PC-9 (cell line): ENCODE measurements at regions of chr1 and their contacts with region 1.

Region 1: GRCh38 chr1:204162231-204163074 is 3.7 kb downstream of the REN start:
- DNase-seq: peak; percentile 93 to 94
- H3K4me3 ChIP-seq: no peak overlapping the region
- H3K27ac ChIP-seq: 0 out of 2 replicates have a peak overlapping the region, but pooled peaks have one; percentile 28
- H3K4me1 ChIP-seq: peaks cover 21% of the 10 kb centered on the region
- H3K27me3 ChIP-seq: no peaks in the 10 kb centered on the region
- CTCF ChIP-seq: peak; percentile 99

Region 2: GRCh38 chr1:204198151-204198994 is 35.9 kb after region 1 on chr1:
- CTCF ChIA-PET with region 1: interaction called, 64 read pairs
- POLR2A ChIA-PET with region 1: interaction called, 5 read pairs
- intact Hi-C with region 1: loop called (anchors 1 kb)
- DNase-seq: peak; percentile 90 to 95
- H3K4me3 ChIP-seq: peak overlapping the region; percentile 32; the same call in 1 of the 2 replicates
- H3K27ac ChIP-seq: peak overlapping the region; percentile 82
- H3K4me1 ChIP-seq: peaks cover 44% of the 10 kb centered on the region
- H3K27me3 ChIP-seq: no peaks in the 10 kb centered on the region
- CTCF ChIP-seq: peak; percentile 54

Region 3: DNA sequence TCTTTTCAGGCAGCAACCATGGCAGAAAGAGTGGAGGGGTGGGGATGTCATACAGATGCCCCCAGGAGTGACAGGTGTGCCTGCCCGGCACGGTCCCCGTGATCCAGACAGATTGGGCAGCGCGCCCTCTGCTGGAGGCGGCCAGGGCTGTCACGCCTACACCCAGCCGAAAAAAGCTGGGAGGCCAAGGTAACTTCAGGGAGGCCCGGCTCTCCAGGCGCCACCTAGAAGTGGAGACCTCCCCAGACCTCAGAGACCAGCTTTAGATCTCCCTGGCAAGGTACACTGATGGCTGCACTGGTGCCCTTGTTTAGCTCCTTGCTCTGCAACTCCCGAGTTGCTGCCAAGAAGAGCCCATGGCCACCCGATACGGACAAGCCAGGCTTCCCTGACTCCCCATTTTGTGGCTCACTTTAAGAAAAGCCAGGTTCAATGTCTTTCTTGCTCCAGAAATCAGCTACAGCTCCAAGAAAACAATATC is 44.7 kb after region 1 on chr1:
- CTCF ChIA-PET with region 1: interaction called, 25 read pairs
- POLR2A ChIA-PET with region 1: no interaction called
- intact Hi-C with region 1: loop called (anchors 1 kb)
- DNase-seq: peak in 1 of 2 experiments; percentile 74
- H3K4me3 ChIP-seq: no peak overlapping the region
- H3K27ac ChIP-seq: no peak overlapping the region
- H3K4me1 ChIP-seq: peaks cover 29% of the 10 kb centered on the region
- H3K27me3 ChIP-seq: no peaks in the 10 kb centered on the region
- CTCF ChIP-seq: peak; percentile 92

Region 4: DNA sequence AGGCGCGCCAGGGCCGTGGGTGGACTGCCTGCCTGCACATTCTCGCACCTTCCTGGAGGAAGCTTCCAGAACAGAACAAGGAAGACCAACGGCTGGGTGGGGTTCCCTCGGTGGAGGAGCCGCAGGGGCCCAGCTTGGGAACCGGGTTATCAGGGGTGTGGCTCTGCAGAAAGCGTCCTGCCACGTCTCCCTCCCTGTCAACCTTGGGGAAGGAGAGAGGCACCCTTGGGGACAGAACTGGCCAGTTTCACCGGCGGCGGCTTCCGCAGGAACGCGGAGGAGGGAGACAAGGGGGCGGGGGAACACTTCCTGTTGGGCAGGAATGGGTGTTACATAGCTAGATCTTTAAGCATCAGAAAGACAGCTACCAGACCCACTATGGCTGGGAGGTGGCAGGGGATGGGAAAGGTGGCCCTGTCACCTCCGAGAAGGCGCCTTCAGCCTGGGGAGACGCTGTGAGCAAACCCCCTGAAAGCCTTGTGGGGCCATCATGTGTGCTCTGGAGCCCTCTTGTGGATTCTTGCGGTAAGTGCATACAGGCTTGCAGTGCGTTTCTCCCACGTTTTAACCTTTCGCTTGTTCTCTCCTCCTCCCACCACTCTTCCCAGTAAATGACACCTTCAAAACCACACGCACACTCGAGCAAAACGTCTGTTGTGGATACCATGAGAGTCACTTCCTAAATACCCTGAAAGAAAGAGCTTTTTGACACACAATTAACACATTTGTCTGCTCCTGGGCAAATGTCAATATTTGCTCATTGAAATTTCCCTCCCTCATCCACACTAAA is 201.1 kb after region 1 on chr1:
- CTCF ChIA-PET with region 1: no interaction called
- POLR2A ChIA-PET with region 1: no interaction called
- intact Hi-C with region 1: loop called (anchors 1 kb)
- DNase-seq: peak; percentile 34 to 54
- H3K4me3 ChIP-seq: no peak overlapping the region
- H3K27ac ChIP-seq: no peak overlapping the region
- H3K4me1 ChIP-seq: 0 out of 2 replicates have a peak, but pooled peaks cover 3% of the 10 kb centered on the region
- H3K27me3 ChIP-seq: no peaks in the 10 kb centered on the region
- CTCF ChIP-seq: peak; percentile 98

Region 5: DNA sequence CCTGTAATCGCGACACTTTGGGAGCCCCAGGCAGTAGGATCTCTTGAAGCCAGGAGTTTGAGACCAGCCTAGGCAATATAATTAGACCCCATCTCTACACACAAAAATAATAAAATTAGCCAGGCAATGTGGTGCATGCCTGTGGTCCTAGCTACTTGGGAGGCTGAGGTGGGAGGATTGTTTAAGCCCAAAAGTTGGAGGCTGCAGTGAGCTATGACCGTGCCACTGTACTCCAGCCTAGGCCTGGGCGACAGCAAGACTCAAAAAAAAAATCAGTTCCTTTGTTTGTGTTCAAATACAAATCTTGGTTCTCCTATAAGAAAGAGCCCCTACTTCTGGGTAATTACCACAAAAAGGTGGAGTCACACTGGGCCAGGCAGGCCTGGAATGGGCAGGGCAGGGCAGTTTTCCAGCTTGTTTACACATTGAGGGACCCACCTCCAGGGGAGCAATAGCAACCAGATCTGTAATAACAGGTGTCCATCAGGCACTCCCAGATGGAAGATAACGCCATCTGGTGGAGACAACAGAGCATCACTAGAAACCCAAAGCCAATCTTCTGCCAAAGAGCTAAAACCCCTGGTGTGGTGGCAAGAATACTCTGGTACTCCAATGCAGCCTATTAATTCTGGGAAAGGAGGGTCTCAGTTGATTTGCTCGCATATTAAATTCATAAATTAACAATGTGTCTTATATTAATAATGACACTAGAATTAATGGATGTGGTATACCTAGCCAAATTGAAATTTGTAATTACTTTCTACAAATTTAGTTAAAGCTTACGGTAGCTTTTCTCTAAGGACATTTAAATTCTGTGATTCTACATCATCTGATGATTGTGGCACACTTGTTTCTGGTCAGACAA is 236.0 kb after region 1 on chr1:
- CTCF ChIA-PET with region 1: interaction called, 14 read pairs
- POLR2A ChIA-PET with region 1: no interaction called
- intact Hi-C with region 1: loop called (anchors 1 kb)
- DNase-seq: peak; percentile 88 to 92
- H3K4me3 ChIP-seq: no peak overlapping the region
- H3K27ac ChIP-seq: no peak overlapping the region
- H3K4me1 ChIP-seq: 0 out of 2 replicates have a peak, but pooled peaks cover 5% of the 10 kb centered on the region
- H3K27me3 ChIP-seq: no peaks in the 10 kb centered on the region
- CTCF ChIP-seq: peak; percentile 87